ENCODE measurements at regions of chr4 and their contacts with region 1.

Region 1: GRCh38 chr4:5998333-5998936 is 19.8 kb downstream of the C4orf50 start:
- ATAC-seq: peak; percentile 64 to 99 (median 98)
- H3K4me3 ChIP-seq: no peak overlapping the region
- H3K27ac ChIP-seq: no peak overlapping the region
- H3K4me1 ChIP-seq: peaks cover 0 to 3% of the 10 kb centered on the region in 2 donors

Region 2: DNA sequence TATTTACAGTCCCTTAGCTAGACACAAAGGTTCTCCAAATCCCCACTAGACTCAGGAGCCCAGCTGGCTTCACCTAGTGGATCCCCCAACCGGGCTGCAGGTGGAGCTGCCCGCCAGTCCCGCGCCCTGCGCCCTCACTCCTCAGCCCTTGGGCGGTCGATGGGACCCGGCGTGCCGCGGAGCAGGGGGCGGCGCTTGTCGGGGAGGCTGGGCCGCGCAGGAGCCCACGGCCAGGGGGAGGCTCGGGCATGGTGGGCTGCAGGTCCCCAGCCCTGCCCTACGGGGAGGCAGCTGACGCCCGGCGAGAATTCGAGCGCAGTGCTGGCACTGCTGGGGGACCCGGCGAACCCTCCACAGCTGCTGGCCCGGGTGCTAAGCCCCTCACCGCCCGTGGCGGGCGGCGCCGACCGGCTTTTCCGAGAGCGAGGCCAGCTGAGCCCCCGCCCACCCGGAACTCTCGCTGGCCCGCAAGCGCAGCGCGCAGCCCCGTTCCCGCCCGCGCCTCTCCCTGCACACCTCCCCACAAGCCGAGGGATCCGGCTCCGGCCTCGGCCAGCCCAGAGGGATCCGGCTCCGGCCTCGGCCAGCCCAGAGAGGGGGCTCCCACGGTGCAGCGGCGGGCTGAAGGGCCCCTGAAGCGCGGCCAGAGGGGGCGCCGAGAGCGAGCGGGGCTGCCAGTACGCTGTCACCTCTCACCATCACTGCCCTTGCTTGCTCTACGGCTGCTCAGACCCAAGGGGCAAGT is 310.6 kb after region 1 on chr4:
- in situ Hi-C with region 1: loop called in 1 of 9 experiments (anchors 25 kb)
- ATAC-seq: peak; percentile 36 to 91 (median 88)
- H3K4me3 ChIP-seq: peak overlapping the region; percentile 13 to 53 (median 43)
- H3K27ac ChIP-seq: peak overlapping the region; percentile 13 to 77
- H3K4me1 ChIP-seq: peaks cover 0 to 4% of the 10 kb centered on the region in 2 donors

Region 3: GRCh38 chr4:6327041-6327917 is 328.8 kb after region 1 on chr4:
- in situ Hi-C with region 1: loop called in 2 of 9 experiments (anchors 10 to 25 kb)
- ATAC-seq: peak; percentile 34 to 92 (median 64)
- H3K4me3 ChIP-seq: no peak overlapping the region
- H3K27ac ChIP-seq: no peak overlapping the region
- H3K4me1 ChIP-seq: peaks cover 3 to 9% of the 10 kb centered on the region in 2 donors